ENCODE measurements at regions of chr10 and their contacts with region 1.

Region 1: DNA sequence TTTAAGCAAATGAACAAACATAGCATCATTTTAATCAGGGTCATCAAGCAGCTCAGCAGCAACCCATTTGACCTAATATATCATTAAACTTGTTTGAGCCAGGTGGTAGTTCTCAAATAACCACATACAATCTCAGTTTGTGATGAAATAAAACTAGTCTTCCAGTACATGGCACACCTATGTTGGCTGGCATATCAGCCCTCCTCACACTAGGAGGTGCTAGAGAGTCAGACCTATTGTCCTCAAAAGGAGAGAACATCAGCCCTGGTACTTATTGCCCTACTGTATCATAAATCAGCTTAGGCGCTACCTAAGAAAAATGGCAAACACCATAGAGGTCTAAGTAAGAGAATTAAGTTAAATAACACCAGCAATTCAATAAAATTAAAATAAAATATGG is 81.7 kb downstream of the CABCOCO1 start:
- DNase-seq: no peak

Region 2: DNA sequence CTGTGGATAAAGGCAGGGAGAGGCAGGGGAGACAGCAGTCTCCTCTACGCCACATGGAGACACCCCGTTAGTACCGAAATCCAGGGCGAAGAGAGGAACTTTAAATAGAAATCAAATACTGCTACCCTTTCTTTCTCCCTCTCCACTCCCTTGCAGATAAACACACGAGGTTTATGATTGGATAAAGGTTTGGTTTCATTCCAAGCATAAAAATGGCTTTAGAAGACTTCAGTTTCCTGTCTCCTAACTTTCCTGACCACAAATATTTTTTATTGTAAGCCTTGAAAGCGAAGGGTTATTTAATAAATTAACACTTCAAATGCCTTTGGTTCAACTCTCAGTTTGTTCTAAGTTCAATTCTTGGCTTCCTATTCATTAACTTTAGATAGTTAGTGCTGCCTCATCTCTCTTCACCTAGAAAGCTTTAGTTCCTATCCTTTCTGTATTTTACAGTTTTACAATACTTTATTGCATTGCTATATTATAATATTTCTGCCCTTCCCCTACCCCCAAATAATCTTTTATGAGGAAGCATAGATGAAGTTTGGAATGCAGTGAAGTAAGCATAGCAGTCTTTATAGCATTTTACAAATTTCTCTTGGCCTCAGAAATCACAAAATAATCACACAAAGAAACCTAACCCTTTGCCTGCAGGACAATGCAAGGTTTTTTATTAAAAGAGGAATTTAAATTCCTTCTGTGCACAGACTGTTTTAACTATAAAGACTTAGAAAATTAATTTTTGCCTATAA is 125.5 kb after region 1 on chr10:
- intact Hi-C with region 1: loop called (anchors 10 kb)
- DNase-seq: no peak